ENCODE measurements at regions of chr20 and their contacts with region 1.

Region 1: GRCh38 chr20:61694682-61695081 is 371.0 kb downstream of the TAF4 start:
- DNase-seq: peak in 1 of 5 donors; percentile 39
- ATAC-seq: peak in 2 of 4 donors; percentile 16 to 54
- H3K4me3 ChIP-seq: no peak overlapping the region
- H3K27ac ChIP-seq: no peak overlapping the region
- H3K4me1 ChIP-seq: peaks cover 0 to 17% (median 0%) of the 10 kb centered on the region in 12 donors
- H3K27me3 ChIP-seq: peaks cover 0 to 39% (median 0%) of the 10 kb centered on the region in 9 donors
- CTCF ChIP-seq: no peak
- POLR2A ChIP-seq: no peak

Region 2: DNA sequence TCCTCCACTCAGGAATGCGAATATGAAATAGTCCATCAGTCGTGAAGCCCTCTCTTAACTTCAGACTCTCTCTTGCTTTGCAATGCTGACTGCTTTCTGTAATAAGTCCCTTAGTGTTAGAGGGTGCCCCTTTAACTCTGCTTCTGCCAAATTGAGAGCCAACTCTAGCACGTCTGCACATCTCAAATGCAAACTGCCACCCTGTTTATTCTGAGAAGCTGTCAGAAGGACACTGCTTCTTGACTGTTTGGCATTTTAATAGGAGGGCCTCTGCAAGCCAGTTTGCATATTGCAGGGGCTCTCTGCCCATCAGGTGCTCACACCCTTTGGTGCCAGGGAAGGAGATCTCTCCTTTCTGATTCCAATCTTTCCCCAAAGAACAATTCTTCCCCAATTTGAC is 1032.4 kb before region 1 on chr20:
- intact Hi-C with region 1: loop called in 1 of 10 experiments (anchors 5 kb)
- DNase-seq: no peak
- ATAC-seq: no peak
- H3K4me3 ChIP-seq: no peak overlapping the region
- H3K27ac ChIP-seq: no peak overlapping the region
- H3K4me1 ChIP-seq: no peaks in the 10 kb centered on the region
- H3K27me3 ChIP-seq: peaks cover 0 to 27% (median 0%) of the 10 kb centered on the region in 9 donors
- CTCF ChIP-seq: no peak
- POLR2A ChIP-seq: no peak

Measured in heart left ventricle (tissue), 16 donors.